CD14-positive monocyte (primary cell): ENCODE measurements at regions of chr9 and their contacts with region 1.

Region 1: GRCh38 chr9:114653556-114654159 is 3.9 kb downstream of the TEX53 start:
- DNase-seq: peak; percentile 55 to 69 (median 64)
- H3K4me3 ChIP-seq: no peak overlapping the region
- H3K4me3 Mint-ChIP-seq: no peak overlapping the region
- H3K27ac ChIP-seq: no peak overlapping the region
- H3K27ac Mint-ChIP-seq: no peak overlapping the region
- H3K4me1 ChIP-seq: peaks cover 0 to 6% of the 10 kb centered on the region in 2 donors
- H3K4me1 Mint-ChIP-seq: peaks cover 14% of the 10 kb centered on the region
- H3K27me3 ChIP-seq: no peaks in the 10 kb centered on the region
- H3K27me3 Mint-ChIP-seq: peaks cover 0 to 3% (median 1%) of the 10 kb centered on the region in 3 donors
- CTCF ChIP-seq: peak; percentile 91

Region 2: DNA sequence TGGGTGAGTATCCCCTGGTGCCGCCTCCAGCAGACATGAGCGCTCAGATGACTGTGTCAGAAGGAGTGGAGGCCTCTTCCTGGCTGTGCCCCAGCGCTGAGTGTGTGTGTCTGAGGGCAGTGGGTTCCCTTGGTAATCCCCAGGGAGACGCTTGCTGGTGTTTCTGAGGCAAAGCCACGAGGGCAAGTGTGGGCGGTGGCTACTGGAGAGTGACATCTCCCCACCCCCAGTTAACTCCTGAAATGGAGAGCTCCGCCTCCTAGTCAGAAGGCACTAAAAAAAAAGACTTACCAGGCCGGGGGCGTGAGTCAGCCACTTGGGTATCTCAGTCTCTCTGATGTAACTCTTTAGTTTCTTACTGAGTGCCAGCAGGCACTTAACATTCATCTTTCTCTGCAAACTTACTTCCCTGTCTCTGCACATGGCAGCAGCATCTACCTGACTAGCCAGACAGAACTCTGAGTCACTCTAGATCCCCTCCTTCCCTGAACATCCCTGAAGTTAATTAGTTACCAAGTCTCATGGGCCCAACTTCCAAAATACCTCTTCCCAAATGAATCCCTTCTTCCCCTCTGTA is 304.7 kb before region 1 on chr9:
- intact Hi-C with region 1: loop called in 1 of 2 experiments (anchors 10 kb)
- DNase-seq: peak; percentile 50 to 71 (median 64)
- H3K4me3 ChIP-seq: no peak overlapping the region
- H3K4me3 Mint-ChIP-seq: no peak overlapping the region
- H3K27ac ChIP-seq: peak overlapping the region in 1 of 2 donors; percentile 69
- H3K27ac Mint-ChIP-seq: peak overlapping the region; percentile 72 to 91 (median 85)
- H3K4me1 ChIP-seq: no peaks in the 10 kb centered on the region
- H3K4me1 Mint-ChIP-seq: peaks cover 17% of the 10 kb centered on the region
- H3K27me3 ChIP-seq: no peaks in the 10 kb centered on the region
- H3K27me3 Mint-ChIP-seq: peaks cover 0 to 2% (median 0%) of the 10 kb centered on the region in 3 donors
- CTCF ChIP-seq: no peak

Region 3: DNA sequence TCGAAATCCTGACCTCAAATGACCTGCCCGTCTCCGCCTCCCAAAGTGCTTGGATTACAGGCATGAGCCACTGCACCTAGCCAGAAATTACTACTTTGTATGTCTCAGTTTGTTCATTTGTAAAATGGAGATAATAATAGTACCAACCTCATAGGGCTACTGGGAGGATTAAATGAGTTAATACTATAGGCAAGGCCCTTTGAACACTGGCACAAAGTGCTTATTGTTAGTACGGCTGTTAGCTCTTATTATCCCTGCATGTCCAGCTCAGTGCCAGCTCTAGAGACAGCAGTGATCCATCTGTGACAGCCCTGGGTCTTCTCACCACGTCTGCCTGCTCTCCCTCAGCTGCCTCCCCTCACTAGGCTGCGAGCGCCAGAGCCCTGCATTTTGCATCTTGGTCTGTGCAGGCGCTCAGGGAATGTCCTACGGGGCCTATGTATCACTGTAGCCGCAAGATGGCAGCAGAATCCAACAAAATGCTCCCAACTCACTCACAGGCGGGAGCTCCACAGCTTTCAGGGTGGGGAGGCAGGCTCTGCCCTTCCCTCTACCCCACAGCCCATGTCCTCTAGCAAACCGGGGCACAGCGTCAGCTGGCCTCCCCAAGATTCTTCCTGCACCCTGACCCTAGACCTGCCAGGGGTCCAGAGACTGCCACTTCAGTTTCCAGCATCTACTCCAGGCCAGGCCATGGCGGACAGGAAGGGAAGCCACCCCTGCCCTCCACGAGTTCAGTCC is 248.2 kb before region 1 on chr9:
- intact Hi-C with region 1: loop called (anchors 1 to 2 kb)
- DNase-seq: peak; percentile 74 to 82 (median 79)
- H3K4me3 ChIP-seq: no peak overlapping the region
- H3K4me3 Mint-ChIP-seq: no peak overlapping the region
- H3K27ac ChIP-seq: no peak overlapping the region
- H3K27ac Mint-ChIP-seq: peak overlapping the region in 1 of 7 donors; percentile 68
- H3K4me1 ChIP-seq: peaks cover 0 to 13% of the 10 kb centered on the region in 2 donors
- H3K4me1 Mint-ChIP-seq: peaks cover 14% of the 10 kb centered on the region
- H3K27me3 ChIP-seq: no peaks in the 10 kb centered on the region
- H3K27me3 Mint-ChIP-seq: peaks cover 0 to 4% (median 1%) of the 10 kb centered on the region in 3 donors
- CTCF ChIP-seq: peak; percentile 82

Region 4: DNA sequence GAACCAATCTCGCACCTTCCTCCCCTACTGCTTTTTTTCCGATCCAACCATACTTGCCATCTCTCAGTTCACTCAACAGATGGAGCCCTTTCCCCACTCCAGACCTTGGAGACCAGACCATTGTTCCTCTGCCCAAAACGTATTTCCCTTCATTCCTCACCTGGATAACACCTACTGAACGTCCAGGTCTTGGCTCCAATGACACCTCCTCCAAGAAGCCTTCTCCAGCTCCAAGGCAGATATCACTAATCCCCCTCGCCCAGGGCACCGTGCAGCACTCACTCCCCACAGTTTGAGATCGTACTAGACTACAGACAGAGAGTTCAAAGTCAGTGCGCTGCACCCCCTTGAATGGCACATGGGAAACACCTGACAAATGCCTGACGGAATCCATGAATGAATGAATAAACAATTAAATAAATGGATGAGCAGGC is 218.8 kb before region 1 on chr9:
- intact Hi-C with region 1: loop called in 1 of 2 experiments (anchors 10 kb)
- DNase-seq: peak in 1 of 3 donors; percentile 25
- H3K4me3 ChIP-seq: no peak overlapping the region
- H3K4me3 Mint-ChIP-seq: no peak overlapping the region
- H3K27ac ChIP-seq: no peak overlapping the region
- H3K27ac Mint-ChIP-seq: no peak overlapping the region
- H3K4me1 ChIP-seq: no peaks in the 10 kb centered on the region
- H3K4me1 Mint-ChIP-seq: no peaks in the 10 kb centered on the region
- H3K27me3 ChIP-seq: no peaks in the 10 kb centered on the region
- H3K27me3 Mint-ChIP-seq: peaks cover 0 to 2% (median 0%) of the 10 kb centered on the region in 3 donors
- CTCF ChIP-seq: peak; percentile 34

Region 5: GRCh38 chr9:114487607-114488300 is 165.9 kb before region 1 on chr9:
- intact Hi-C with region 1: loop called (anchors 2 to 5 kb)
- DNase-seq: peak; percentile 58 to 74 (median 62)
- H3K4me3 ChIP-seq: no peak overlapping the region
- H3K4me3 Mint-ChIP-seq: no peak overlapping the region
- H3K27ac ChIP-seq: no peak overlapping the region
- H3K27ac Mint-ChIP-seq: peak overlapping the region in 1 of 7 donors; percentile 62
- H3K4me1 ChIP-seq: peaks cover 13 to 15% of the 10 kb centered on the region in 2 donors
- H3K4me1 Mint-ChIP-seq: peaks cover 25% of the 10 kb centered on the region
- H3K27me3 ChIP-seq: no peaks in the 10 kb centered on the region
- H3K27me3 Mint-ChIP-seq: peaks cover 0 to 6% (median 2%) of the 10 kb centered on the region in 3 donors
- CTCF ChIP-seq: peak; percentile 94

Region 6: DNA sequence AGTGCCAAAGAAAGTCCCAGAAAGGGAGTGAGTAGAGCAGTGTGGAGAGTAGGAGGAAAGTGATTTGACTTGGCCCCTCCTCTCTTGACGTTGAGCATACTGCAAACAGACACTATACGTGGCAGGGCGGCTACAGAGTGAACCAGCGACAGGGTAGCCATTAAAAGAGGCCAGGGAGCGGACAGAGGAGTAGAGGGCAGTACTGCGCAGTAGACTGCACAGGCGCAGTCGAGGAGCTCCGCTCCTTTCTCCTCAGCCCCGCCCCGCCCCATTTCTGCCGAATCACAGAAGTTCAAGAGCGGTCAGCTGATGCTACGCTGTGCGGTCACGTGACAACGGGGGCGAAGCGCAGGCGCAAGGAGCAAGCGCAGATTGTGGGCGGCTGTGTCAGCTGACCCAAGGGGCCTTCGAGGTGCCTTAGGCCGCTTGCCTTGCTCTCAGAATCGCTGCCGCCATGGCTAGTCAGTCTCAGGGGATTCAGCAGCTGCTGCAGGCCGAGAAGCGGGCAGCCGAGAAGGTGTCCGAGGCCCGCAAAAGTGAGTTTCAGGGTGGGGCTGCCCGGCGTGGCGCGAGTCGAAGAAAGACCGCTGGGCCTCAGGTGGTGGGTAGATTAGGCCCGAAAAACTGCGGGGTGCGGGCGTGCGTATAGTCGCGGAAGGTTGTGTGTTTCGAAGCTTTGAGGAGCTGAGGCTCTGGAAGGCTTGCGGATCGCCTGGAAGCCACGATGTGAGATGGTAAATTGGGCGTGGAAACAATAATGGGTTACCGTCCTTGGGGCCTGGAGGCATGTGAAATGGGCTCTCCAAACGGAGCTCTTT is 66.1 kb before region 1 on chr9 and contains the start of gene ATP6V1G1:
- intact Hi-C with region 1: loop called (anchors 5 to 10 kb)
- DNase-seq: peak; percentile 99 to 100 (median 99)
- H3K4me3 ChIP-seq: peak within 1 kb of the TSS; percentile 67 to 89 (median 87)
- H3K4me3 Mint-ChIP-seq: peak within 1 kb of the TSS; percentile 96 to 99
- H3K27ac ChIP-seq: peak within 1 kb of the TSS; percentile 96
- H3K27ac Mint-ChIP-seq: peak within 1 kb of the TSS; percentile 97 to 100 (median 99)
- H3K4me1 ChIP-seq: peaks cover 48 to 55% of the 10 kb centered on the region in 2 donors
- H3K4me1 Mint-ChIP-seq: peaks cover 46% of the 10 kb centered on the region
- H3K27me3 ChIP-seq: no peaks in the 10 kb centered on the region
- H3K27me3 Mint-ChIP-seq: no peaks in the 10 kb centered on the region
- CTCF ChIP-seq: no peak
- polyA plus RNA-seq, gene ATP6V1G1: 146 to 226 (median 214) TPM

Region 7: GRCh38 chr9:114611516-114612271 is 42.0 kb before region 1 on chr9:
- intact Hi-C with region 1: no loop called
- DNase-seq: peak; percentile 55 to 70 (median 69)
- H3K4me3 ChIP-seq: peak overlapping the region; percentile 62 to 95 (median 82)
- H3K4me3 Mint-ChIP-seq: peak overlapping the region; percentile 84 to 92
- H3K27ac ChIP-seq: peak overlapping the region; percentile 87 to 90
- H3K27ac Mint-ChIP-seq: peak overlapping the region; percentile 88 to 96 (median 92)
- H3K4me1 ChIP-seq: peaks cover 45 to 60% of the 10 kb centered on the region in 2 donors
- H3K4me1 Mint-ChIP-seq: peaks cover 66% of the 10 kb centered on the region
- H3K27me3 ChIP-seq: no peaks in the 10 kb centered on the region
- H3K27me3 Mint-ChIP-seq: peaks cover 0 to 3% (median 2%) of the 10 kb centered on the region in 3 donors
- CTCF ChIP-seq: no peak

Region 8: DNA sequence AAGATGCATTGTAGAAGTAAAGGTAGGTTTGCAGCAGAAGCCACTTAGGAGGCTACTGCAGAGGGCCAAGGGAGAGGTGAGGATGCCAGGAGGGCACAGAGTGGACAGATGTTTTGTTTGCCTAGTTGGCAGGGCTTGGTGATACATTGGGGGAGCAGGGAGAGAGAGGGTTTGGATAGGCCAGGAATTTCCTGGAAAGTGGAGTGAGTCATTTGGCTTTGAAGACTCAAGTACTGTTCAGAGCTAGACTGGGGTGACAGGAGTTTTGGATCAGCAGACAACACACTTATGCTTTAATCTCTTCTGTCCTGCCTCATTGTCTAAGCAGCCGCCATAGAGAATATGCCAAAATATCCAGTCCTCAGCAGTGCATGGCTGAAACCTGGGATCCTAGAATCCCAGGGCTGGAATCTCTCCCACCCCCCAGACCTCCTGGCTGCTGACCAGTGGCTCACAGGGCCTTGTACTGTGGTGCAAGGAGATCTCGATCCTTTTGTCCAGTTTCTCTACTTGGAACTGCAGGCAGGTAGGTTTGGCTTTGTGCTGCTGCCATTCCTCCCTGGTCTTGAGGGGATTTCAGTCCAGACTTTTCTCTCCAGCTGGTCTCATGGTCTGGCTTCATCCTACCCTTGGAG is 31.6 kb before region 1 on chr9:
- intact Hi-C with region 1: no loop called
- DNase-seq: no peak
- H3K4me3 ChIP-seq: no peak overlapping the region
- H3K4me3 Mint-ChIP-seq: no peak overlapping the region
- H3K27ac ChIP-seq: peak overlapping the region in 1 of 2 donors; percentile 31
- H3K27ac Mint-ChIP-seq: peak overlapping the region in 2 of 7 donors; percentile 15 to 51
- H3K4me1 ChIP-seq: peaks cover 34 to 39% of the 10 kb centered on the region in 2 donors
- H3K4me1 Mint-ChIP-seq: peaks cover 31% of the 10 kb centered on the region
- H3K27me3 ChIP-seq: no peaks in the 10 kb centered on the region
- H3K27me3 Mint-ChIP-seq: peaks cover 0 to 1% (median 1%) of the 10 kb centered on the region in 3 donors
- CTCF ChIP-seq: no peak